PC-3 (cell line): ENCODE measurements at regions of chr10 and their contacts with region 1.

Region 1: DNA sequence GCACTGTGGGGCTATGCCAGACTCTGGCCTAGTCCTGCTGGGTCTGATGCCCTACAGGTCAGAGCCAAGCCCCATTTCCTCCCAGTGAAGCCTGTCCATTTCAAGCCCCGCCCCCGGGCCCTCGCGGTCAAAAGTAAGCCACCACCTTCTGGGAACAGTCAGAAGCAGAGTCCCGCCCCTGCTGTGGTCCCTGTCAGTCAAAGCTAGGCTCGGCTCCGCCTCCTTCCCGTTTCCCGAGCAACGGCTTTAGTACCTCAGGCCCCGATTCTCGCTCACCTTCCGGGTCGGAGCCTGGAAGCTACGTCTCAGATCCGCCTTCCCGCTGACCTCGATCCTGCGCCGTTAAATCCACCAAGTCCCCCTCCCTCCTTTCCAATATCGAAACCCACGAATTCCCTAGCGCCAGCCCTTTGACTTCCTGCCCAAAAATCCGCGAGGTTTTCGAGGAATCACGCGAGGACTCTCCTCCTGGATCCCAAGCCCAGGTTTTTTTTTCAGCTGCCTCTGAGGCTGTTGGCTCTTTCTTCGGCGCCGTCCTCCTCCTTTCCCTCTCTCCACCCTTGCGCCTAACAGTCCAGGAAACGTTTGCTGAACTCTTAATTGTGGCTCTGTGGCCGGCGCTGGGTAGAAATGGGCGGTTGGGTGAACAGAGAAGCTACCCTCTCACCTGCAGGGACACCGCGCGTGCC is 11.8 kb downstream of the SFXN3 start:
- DNase-seq: peak; percentile 95
- ATAC-seq: peak; percentile 95
- H3K4me3 ChIP-seq: peak overlapping the region; percentile 62
- H3K27ac ChIP-seq: peak overlapping the region; percentile 62
- H3K4me1 ChIP-seq: peaks cover 16% of the 10 kb centered on the region
- H3K27me3 ChIP-seq: no peaks in the 10 kb centered on the region
- CTCF ChIP-seq: no peak

Region 2: GRCh38 chr10:100998991-100999741 is 43.6 kb before region 1 on chr10:
- CTCF ChIA-PET with region 1: interaction called, 16 read pairs
- POLR2A ChIA-PET with region 1: no interaction called
- intact Hi-C with region 1: no loop called
- DNase-seq: peak; percentile 64
- ATAC-seq: peak; percentile 38
- H3K4me3 ChIP-seq: peak overlapping the region; percentile 88
- H3K27ac ChIP-seq: peak overlapping the region; percentile 76
- H3K4me1 ChIP-seq: peaks cover 36% of the 10 kb centered on the region
- H3K27me3 ChIP-seq: no peaks in the 10 kb centered on the region
- CTCF ChIP-seq: peak; percentile 66

Region 3: GRCh38 chr10:101060036-101060950 is 17.5 kb after region 1 on chr10:
- CTCF ChIA-PET with region 1: interaction called, 7 read pairs
- POLR2A ChIA-PET with region 1: interaction called, 11 read pairs
- intact Hi-C with region 1: no loop called
- DNase-seq: peak; percentile 93
- ATAC-seq: peak; percentile 48
- H3K4me3 ChIP-seq: peak overlapping the region; percentile 87
- H3K27ac ChIP-seq: peak overlapping the region; percentile 85
- H3K4me1 ChIP-seq: peaks cover 35% of the 10 kb centered on the region
- H3K27me3 ChIP-seq: no peaks in the 10 kb centered on the region
- CTCF ChIP-seq: peak; percentile 90

Region 4: DNA sequence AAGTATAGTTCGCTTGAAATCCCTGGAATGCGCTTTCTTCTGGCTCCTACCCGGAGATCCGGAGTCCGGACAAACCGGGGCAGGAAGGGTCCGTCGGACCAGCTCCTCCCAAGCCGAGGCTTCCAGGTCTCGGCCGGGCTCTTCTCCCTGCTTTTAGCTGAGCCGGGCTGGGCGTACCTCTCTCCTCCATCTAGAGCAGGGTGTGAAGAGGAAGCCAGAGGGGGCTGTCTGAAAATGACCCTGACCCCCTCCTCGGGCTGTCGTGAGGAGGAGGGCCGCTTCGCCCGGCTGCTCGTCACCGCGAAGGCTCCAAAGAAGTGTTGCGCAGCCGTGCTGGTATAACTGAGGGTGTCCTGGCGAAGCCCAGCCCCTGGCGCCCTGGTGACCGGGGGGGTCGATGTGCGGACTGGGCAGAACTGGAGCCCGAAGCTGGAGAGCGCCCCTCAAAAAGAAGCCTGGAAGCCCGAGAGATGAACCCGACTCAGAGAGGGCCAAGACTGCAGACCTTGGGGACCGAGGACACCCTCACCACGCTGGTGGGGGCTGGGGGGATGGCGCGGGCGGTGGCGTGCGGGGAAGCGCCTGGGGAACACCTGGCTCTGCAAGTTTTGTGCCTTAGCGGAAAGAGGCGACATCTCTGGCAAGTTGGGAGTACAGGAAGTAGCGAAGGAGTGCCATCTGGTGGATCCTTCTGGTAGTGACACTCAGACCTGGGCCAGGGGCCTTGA is 24.7 kb after region 1 on chr10:
- CTCF ChIA-PET with region 1: interaction called, 5 read pairs
- POLR2A ChIA-PET with region 1: interaction called, 8 read pairs
- intact Hi-C with region 1: loop called (anchors 1 kb)
- DNase-seq: peak; percentile 87
- ATAC-seq: peak; percentile 34
- H3K4me3 ChIP-seq: peak overlapping the region; percentile 72
- H3K27ac ChIP-seq: peak overlapping the region; percentile 41
- H3K4me1 ChIP-seq: peaks cover 26% of the 10 kb centered on the region
- H3K27me3 ChIP-seq: no peaks in the 10 kb centered on the region
- CTCF ChIP-seq: peak; percentile 67

Region 5: DNA sequence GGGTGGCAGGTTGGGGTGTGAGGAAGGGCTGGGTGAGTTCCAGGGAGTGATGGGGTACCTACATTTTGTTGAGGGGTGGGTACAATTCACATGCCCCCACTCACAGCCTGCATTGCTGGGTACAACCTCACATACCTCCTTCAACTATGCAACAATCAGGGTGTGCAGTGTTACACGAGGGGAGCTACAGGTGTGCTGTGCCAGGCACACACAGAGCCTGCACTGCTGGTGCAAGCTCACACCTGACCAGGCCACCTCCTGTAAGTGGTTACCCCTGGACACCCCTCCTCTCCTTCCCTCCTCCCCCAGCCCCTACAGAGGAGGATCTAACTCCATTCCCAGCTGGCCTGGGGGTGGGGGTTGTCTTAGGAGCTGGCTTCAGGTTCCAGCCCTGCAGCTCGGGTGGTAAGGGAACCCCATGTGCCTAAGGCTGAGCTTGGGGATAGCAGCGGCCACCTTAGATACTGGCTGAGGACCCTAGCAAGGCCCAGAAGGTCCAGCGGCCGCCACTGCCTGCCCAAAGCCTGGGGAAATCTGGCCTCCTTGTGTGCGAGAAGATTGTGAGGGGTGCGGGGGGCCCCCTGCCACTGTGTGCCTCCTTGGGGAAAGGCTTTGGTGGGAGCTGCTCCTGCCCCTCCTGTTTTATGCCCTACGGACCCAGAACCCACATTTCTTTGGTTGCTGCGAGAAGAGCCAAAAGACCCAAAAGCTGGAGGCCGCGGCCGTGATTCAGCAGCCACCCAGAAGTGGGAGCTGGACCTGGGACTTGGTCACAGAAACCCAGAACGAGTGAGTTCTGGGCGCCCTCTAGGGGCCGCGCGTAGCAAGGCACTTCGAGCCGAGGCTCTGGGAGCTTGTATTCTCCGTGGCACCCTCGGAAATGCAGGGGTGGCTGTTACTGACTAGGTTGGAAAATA is 99.1 kb after region 1 on chr10:
- CTCF ChIA-PET with region 1: no interaction called
- POLR2A ChIA-PET with region 1: no interaction called
- intact Hi-C with region 1: loop called (anchors 5 kb)
- DNase-seq: peak; percentile 90
- ATAC-seq: peak; percentile 90
- H3K4me3 ChIP-seq: no peak overlapping the region
- H3K27ac ChIP-seq: no peak overlapping the region
- H3K4me1 ChIP-seq: peaks cover 6% of the 10 kb centered on the region; the same call in 1 of the 2 replicates
- H3K27me3 ChIP-seq: no peaks in the 10 kb centered on the region
- CTCF ChIP-seq: peak; percentile 89